PC-3 (cell line): ENCODE measurements at regions of chr17 and their contacts with region 1.

Region 1: DNA sequence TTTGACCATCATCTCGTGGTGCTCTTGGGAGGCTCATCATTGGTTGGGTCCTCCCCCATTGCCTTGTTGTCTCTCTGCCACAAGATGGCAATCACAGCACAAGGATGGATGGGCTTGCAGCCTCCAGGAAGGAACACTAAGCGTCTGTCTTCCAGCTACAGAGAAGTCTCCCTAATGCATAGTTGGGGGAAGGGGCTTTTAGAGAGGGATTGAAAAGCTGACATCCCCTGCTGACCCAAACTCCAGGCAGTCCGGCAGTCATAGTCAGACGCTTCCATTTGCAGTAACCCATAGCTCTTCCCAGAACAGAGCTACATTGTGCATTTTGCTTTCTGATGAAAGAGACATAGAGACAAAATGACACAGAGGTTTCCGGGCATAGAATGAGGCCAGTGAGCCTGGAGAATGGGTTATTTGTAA is 111.4 kb downstream of the UTP18 start:
- DNase-seq: peak; percentile 85
- ATAC-seq: peak; percentile 94
- H3K4me3 ChIP-seq: no peak overlapping the region
- H3K27ac ChIP-seq: no peak overlapping the region
- H3K4me1 ChIP-seq: no peaks in the 10 kb centered on the region
- H3K27me3 ChIP-seq: peaks cover 34% of the 10 kb centered on the region
- CTCF ChIP-seq: peak; percentile 93

Region 2: DNA sequence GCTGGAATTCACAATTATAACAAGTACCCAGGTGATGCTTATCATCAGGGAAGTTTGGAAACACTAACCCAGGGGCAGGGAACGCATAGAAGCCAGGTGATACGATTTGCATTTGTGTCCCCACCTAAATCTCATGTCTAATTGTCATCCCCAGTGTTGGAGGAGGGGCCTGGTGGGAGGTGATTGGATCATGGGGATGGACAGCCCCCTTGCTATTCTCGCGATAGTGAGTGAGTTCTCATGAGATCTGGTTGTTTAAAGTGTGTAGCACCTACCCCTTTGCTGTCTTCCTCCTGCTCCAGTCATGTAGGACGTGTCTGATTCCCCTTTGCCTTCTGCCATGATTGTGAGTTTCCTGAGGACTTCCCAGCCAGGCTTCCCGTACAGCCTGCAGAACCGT is 164.9 kb after region 1 on chr17:
- CTCF ChIA-PET with region 1: no interaction called
- POLR2A ChIA-PET with region 1: no interaction called
- intact Hi-C with region 1: loop called (anchors 1 kb)
- DNase-seq: no peak
- ATAC-seq: no peak
- H3K4me3 ChIP-seq: no peak overlapping the region
- H3K27ac ChIP-seq: no peak overlapping the region
- H3K4me1 ChIP-seq: no peaks in the 10 kb centered on the region
- H3K27me3 ChIP-seq: peaks cover 29% of the 10 kb centered on the region
- CTCF ChIP-seq: no peak

Region 3: DNA sequence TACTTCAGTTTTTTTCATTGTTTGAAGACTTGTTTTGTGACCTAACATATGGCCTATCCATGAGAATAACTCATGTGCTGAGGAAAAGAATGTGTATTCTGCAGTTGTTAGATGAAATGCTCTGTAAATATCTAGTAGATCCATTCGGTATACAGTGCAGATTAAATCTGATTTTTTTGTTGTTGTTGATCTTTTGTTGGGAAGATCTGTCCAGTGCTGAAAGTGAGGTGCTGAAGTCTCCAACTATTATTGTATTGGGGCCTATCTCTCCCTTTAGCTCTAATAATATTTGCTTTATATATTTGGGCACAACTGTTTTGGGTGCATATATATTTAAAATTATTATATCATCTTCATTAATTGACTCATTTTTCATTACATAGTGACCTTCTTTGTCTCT is 973.2 kb after region 1 on chr17:
- CTCF ChIA-PET with region 1: no interaction called
- POLR2A ChIA-PET with region 1: no interaction called
- intact Hi-C with region 1: loop called (anchors 10 kb)
- DNase-seq: no peak
- ATAC-seq: no peak
- H3K4me3 ChIP-seq: no peak overlapping the region
- H3K27ac ChIP-seq: no peak overlapping the region
- H3K4me1 ChIP-seq: no peaks in the 10 kb centered on the region
- H3K27me3 ChIP-seq: no peaks in the 10 kb centered on the region
- CTCF ChIP-seq: no peak